Right cardiac atrium (tissue), 5 donors: ENCODE measurements at regions of chr11 and their contacts with region 1.

Region 1: DNA sequence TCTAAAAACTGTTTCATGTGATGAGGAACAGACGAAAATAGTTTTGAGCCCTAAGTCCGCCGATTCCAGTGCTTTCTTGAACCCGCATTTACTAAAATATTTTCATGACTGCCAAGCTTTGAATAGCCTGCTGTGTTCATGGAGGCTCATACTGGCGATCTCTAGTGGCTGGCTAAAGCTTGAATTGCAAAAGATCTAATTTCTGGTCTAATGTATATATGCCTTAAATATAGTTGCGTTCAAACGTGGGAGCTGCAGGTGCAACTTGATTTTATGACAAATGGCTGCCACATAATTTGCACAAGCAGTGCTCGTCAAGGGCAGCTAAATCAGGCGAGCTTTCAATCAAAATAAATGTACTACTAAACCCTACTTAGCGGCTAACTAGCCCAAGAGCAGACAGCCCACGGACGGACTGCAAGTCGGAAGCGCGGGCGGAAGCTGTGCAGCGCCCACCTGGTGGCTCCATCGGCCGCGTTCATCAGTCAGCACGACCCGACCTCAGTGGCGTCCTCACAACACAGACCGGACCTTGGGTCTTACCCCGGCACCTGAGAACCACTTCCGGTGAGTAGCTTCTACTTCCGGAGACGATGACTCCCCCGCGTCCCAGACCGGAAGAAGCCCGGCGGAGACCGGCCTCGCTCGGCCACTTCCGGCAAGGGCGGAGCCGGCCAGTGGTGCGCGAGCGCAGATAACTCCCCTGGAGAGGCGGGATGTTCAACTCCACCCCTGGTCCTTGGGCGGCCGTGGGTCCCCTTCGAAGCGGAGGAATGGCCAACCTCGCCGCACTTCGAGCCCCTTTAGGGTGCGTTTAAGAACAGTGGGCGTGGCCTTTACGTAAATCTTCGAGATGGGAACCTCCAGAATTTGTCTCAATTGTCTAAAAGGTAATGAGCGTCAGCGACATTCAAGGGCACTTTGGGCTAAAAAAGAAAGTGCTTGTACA is 6.1 kb downstream of the RPL27A start:
- DNase-seq: peak; percentile 96 to 98 (median 98)
- ATAC-seq: peak; percentile 97 to 99
- H3K4me3 ChIP-seq: peak overlapping the region; percentile 79
- H3K27ac ChIP-seq: peak overlapping the region; percentile 95
- H3K4me1 ChIP-seq: peaks cover 4% of the 10 kb centered on the region
- H3K27me3 ChIP-seq: no peaks in the 10 kb centered on the region

Region 2: DNA sequence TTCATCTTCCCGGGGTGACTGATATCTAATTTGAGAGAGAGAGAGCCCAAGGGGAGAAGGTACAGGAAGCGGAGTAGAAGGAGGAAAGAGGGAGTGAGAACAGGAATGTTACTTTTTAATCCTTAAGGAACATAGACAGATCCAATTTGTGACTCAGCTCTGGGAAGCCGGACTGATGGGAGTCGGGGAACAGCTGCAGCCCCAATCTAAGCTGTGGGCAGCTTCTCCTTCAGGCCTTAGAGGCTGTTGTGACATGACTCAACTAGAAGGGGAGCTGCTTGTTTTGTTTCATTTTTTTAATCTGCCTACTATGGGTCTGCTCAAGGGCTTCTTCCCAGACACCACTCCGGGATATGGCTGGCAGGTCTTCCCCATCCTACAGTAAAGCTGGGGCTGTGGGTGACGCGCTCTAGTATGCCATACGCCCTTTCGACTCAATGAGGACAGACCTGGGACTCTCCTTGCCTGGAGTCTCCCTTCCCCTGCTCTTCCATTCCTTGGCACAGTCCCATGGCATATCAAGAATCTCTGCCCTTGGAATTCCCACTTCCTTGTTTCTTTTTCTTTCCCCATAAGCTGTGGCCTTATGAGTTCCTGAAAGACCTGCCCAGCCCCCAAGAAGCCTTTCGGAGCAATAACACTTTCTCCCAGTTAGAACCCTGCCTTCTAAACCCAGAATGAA is 119.0 kb after region 1 on chr11:
- intact Hi-C with region 1: loop called in 3 of 4 experiments (anchors 2 to 5 kb)
- DNase-seq: peak; percentile 62 to 79 (median 72)
- ATAC-seq: peak; percentile 63 to 67
- H3K4me3 ChIP-seq: peak overlapping the region; percentile 73
- H3K27ac ChIP-seq: peak overlapping the region; percentile 83
- H3K4me1 ChIP-seq: peaks cover 26% of the 10 kb centered on the region
- H3K27me3 ChIP-seq: no peaks in the 10 kb centered on the region

Region 3: GRCh38 chr11:8813658-8814057 is 125.0 kb after region 1 on chr11:
- intact Hi-C with region 1: loop called in 3 of 4 experiments (anchors 2 to 5 kb)
- DNase-seq: peak; percentile 75 to 88 (median 82)
- ATAC-seq: peak; percentile 64 to 68
- H3K4me3 ChIP-seq: no peak overlapping the region
- H3K27ac ChIP-seq: peak overlapping the region; percentile 11
- H3K4me1 ChIP-seq: peaks cover 3% of the 10 kb centered on the region
- H3K27me3 ChIP-seq: no peaks in the 10 kb centered on the region

Region 4: DNA sequence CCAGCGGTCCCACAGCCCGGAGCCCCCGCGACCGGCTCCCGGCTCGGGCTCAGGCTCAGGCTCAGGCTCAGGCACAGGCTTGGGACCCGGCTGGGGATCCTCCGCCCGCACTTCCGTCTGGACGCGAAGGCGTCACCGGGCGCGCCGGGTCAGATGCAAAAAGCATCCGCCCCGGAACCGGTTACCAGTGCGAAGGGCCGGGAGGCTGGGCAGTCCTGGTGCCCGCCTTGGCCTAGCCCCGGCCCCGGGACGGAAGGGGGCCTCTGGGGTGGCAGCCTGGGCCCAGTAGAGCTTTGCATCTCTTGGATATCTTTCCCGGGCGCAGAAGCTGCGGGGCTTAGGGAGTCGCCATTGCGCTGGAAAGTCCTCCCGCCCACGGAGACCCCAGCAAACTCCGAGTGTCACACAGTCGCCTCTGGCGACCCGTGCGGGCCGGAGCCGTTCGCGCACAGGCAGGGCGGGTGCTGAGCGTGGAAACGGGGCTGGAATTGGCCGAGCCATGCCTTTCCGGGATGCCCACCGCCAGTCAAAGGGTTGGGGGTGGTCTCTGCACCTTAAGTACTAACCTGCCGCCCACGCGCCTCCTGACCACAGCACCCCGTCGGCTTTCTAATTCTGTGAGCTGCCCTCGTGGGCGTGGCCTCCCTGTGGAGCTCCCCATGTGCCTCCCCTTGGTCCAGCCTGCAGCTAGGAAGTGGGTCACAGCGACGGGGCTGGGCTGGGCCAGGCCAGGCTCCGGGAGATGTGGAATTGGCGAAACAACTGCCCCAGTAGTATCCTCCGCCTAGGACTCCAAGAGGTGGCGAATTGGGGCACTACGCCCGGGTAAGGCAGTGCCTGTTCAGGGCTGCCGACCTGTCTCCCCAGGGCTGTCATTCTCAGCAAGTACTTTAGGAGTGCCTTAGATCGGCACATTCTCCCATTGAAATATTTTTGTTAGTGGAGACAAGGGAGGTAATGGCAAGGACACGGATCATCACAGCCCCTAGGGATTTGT is 275.9 kb after region 1 on chr11 and contains the start of gene TMEM9B:
- intact Hi-C with region 1: loop called in 1 of 4 experiments (anchors 5 kb)
- DNase-seq: peak; percentile 94 to 97 (median 96)
- ATAC-seq: peak; percentile 96 to 97
- H3K4me3 ChIP-seq: peak within 1 kb of the TSS; percentile 52
- H3K27ac ChIP-seq: peak within 1 kb of the TSS; percentile 86
- H3K4me1 ChIP-seq: peaks cover 4% of the 10 kb centered on the region
- H3K27me3 ChIP-seq: no peaks in the 10 kb centered on the region
- total RNA-seq, gene TMEM9B: 37.2 to 44.7 (median 40.4) TPM